ENCODE measurements at regions of chr1 and their contacts with region 1.

Region 1: GRCh38 chr1:52002038-52002917 is 11.8 kb upstream of the RAB3B start:
- DNase-seq: peak; percentile 67
- H3K4me3 ChIP-seq: no peak overlapping the region
- H3K27ac ChIP-seq: no peak overlapping the region
- H3K4me1 ChIP-seq: no peaks in the 10 kb centered on the region
- H3K27me3 ChIP-seq: no peaks in the 10 kb centered on the region
- CTCF ChIP-seq: peak; percentile 94

Region 2: GRCh38 chr1:50774759-50775351 is 1227.4 kb before region 1 on chr1:
- CTCF ChIA-PET with region 1: no interaction called
- POLR2A ChIA-PET with region 1: no interaction called
- intact Hi-C with region 1: loop called (anchors 10 kb)
- DNase-seq: no peak
- H3K4me3 ChIP-seq: no peak overlapping the region
- H3K27ac ChIP-seq: no peak overlapping the region
- H3K4me1 ChIP-seq: no peaks in the 10 kb centered on the region
- H3K27me3 ChIP-seq: no peaks in the 10 kb centered on the region
- CTCF ChIP-seq: peak; percentile 83

Region 3: DNA sequence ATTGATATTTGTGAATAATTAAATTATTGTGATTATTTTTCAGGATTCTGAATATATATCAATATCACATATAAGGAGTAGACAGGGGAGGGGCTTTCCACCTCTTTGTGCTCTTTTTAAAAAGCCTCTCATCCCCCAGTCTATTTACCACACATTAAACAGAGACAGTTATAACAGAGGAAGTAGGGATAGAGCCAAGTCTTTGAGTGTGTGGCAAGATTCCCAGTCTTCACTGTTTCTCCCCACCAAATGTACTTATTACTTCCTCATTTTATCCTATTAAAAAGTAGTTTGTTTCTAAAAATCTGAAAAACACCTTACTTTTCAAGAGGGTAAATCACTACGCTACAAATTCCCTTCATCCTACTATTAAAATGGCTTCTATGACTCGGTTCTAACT is 529.9 kb before region 1 on chr1:
- CTCF ChIA-PET with region 1: no interaction called
- POLR2A ChIA-PET with region 1: no interaction called
- intact Hi-C with region 1: no loop called
- DNase-seq: no peak
- H3K4me3 ChIP-seq: no peak overlapping the region
- H3K27ac ChIP-seq: no peak overlapping the region
- H3K4me1 ChIP-seq: no peaks in the 10 kb centered on the region
- H3K27me3 ChIP-seq: no peaks in the 10 kb centered on the region
- CTCF ChIP-seq: no peak

Region 4: DNA sequence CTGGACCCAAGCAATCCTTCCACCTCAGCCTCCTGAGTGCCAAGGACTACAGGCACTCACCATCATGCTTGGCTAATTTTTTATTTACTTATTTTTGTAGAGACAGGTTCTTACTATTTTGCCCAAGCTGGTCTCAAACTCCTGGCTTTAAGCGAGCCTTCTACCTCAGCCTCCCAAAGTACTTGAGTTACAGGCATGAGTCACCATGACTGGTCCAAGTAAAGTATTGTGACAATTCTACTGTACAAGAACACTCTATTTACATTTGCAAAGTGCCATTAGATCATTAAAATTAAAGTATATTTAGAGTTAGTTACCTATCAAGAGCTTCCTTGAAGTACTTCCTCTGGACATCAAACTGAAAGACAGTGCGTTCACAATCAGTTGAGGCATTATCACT is 168.6 kb before region 1 on chr1:
- CTCF ChIA-PET with region 1: no interaction called
- POLR2A ChIA-PET with region 1: no interaction called
- intact Hi-C with region 1: loop called (anchors 10 kb)
- DNase-seq: no peak
- H3K4me3 ChIP-seq: no peak overlapping the region
- H3K27ac ChIP-seq: no peak overlapping the region
- H3K4me1 ChIP-seq: no peaks in the 10 kb centered on the region
- H3K27me3 ChIP-seq: no peaks in the 10 kb centered on the region
- CTCF ChIP-seq: no peak

Region 5: DNA sequence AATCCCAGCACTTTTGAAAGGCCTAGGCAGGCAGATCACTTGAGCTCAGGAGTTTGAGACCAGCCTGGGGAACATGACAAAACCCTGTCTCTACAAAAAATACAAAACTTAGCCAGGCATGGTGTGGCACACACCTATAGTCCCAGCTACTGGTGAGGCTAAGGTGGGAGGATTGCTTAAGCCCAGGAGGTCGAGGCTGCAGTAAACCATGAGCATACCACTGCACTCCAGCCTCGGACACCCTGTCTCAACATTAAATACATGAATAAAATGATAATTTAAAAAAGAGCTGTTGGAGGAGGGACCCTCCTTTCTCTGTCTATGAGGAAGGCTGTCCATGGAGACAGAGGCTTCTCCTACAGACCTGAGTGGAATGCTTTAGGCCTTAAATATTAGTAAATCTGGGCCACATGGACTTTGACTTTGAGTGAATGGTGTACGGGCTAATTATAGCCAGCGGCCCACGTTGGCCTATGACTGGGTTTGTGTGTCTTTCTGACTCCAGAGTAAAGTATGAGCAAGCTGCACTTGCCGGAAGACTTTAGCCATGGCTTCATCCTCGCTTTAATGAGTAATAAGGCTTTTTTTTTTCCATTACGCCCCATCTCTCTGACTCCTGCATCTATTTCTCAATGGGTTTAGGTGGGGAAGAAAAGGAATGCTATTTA is 33.1 kb before region 1 on chr1:
- CTCF ChIA-PET with region 1: no interaction called
- POLR2A ChIA-PET with region 1: no interaction called
- intact Hi-C with region 1: no loop called
- DNase-seq: no peak
- H3K4me3 ChIP-seq: no peak overlapping the region
- H3K27ac ChIP-seq: no peak overlapping the region
- H3K4me1 ChIP-seq: peaks cover 11% of the 10 kb centered on the region
- H3K27me3 ChIP-seq: no peaks in the 10 kb centered on the region
- CTCF ChIP-seq: no peak